ENCODE measurements at regions of chr20 and their contacts with region 1.

Region 1: DNA sequence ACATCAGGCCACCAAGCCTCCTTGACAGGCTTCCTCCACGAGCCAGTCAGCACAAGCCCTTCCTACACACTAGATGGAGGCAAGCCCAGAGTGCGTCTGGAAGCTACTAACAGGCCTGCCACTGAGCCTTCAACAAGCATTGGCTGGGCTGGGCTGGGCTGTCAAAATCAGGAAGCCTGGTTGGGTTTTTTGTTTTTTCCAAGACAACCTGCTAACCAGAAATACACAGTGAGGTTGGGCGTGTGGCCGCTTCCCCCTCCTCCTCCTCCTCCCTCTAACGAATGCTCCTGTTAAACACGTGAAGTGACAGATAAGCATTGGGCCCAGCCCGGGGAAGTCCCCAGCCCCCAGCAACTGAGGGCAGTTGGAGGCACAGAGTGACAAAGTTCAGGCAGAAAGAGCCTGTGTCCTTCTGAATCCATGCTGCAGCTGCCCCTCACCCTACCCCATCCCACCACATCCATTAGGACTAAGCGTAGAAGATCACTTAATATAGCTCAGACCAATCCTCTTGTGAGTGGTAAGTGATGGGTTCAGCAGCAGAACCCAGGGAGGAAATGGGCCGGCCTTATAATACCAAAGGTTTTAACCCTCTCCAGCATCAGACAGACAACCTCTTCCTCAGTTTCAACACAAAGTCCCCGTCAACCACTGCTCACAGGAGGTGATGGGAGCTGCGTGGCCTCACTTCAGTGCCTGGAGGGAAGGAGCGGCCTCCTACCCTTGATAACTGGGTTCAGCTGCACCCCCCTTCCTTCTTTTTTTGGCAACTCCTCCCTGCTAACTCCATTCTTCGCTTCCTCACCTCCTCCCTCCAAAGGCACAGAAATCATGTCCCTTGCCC is 1.1 kb downstream of the NFATC2 start:
- DNase-seq: peak; percentile 78 to 93 (median 83)
- H3K4me3 ChIP-seq: peak overlapping the region; percentile 95
- H3K4me3 Mint-ChIP-seq: peak overlapping the region; percentile 93 to 100 (median 97)
- H3K27ac ChIP-seq: peak overlapping the region; percentile 96
- H3K27ac Mint-ChIP-seq: peak overlapping the region; percentile 95 to 100 (median 98)
- H3K4me1 ChIP-seq: peaks cover 48% of the 10 kb centered on the region
- H3K4me1 Mint-ChIP-seq: peaks cover 55 to 60% (median 58%) of the 10 kb centered on the region in 3 donors
- H3K27me3 ChIP-seq: no peaks in the 10 kb centered on the region
- H3K27me3 Mint-ChIP-seq: peaks cover 0 to 3% of the 10 kb centered on the region in 2 donors

Region 2: DNA sequence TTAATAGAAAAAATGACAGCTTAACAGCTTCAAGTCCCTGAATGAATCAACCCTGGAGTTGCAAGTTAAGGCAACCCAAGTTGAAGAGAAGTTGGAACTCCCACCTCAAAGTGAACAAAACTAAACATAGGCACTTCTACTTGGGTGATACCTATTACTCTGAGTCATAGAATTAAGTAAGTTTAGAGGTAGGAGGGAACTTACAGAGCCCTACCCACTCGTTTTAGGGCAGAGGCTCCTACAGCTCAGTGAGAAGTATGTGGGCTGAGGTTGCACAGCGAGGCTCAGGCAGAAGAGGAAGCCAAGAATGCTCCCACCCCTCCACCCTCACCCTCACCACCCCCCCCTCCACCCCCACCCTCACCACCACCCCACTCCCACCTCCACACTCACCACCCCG is 41.1 kb before region 1 on chr20:
- CTCF ChIA-PET with region 1: interaction called, 21 read pairs
- POLR2A ChIA-PET with region 1: interaction called, 4 read pairs
- DNase-seq: peak; percentile 38 to 86 (median 59)
- H3K4me3 ChIP-seq: no peak overlapping the region
- H3K4me3 Mint-ChIP-seq: peak overlapping the region; percentile 20 to 83 (median 52)
- H3K27ac ChIP-seq: peak overlapping the region; percentile 45
- H3K27ac Mint-ChIP-seq: peak overlapping the region; percentile 70 to 100 (median 97)
- H3K4me1 ChIP-seq: peaks cover 67% of the 10 kb centered on the region
- H3K4me1 Mint-ChIP-seq: peaks cover 79 to 93% (median 90%) of the 10 kb centered on the region in 3 donors
- H3K27me3 ChIP-seq: no peaks in the 10 kb centered on the region
- H3K27me3 Mint-ChIP-seq: no peaks in the 10 kb centered on the region

Region 3: DNA sequence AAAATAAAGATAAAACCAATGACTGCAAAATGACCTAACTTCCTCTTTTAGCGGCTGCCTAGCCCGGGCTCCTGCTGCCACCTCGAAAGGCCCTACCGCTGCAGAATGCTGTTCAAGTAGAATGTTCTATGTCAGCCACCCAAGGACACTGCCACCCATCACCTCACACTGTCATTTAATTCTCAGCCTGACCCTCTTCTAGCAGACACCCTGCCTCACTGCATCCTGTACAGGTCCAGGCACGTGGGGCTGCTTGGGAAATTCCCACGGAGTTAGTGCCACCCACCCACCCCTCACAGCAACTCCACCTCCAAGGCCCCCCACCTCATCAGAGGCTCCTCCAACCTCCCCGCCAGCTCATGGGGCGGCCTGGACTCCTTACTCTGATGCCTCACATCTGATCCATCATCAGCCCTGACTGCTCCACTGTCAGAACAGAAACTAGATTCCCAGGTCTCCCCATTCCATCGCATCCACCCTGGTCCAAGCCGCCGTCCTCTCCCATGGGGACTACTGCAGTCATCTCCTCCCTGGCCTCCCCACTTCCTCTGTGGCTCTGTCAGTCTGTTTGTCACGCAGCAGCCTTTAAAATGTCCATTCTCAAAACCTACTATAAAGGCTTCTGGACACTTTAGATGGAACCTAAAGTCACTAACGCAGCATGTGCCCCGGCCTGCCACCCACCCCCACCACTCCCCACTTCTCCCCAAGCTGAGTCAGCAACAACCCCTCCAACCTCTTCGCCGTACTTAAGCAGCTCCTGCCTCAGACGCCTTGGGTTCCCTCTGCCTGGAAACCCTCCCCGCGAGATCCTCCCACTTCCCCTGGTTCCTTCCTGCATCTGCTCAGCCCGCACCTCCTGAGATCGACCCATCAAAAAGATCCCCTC is 15.9 kb before region 1 on chr20:
- CTCF ChIA-PET with region 1: interaction called, 18 read pairs
- POLR2A ChIA-PET with region 1: interaction called, 3 read pairs
- DNase-seq: peak in 4 of 5 donors; percentile 48 to 72 (median 54)
- H3K4me3 ChIP-seq: peak overlapping the region; percentile 20
- H3K4me3 Mint-ChIP-seq: peak overlapping the region; percentile 32 to 90 (median 80)
- H3K27ac ChIP-seq: peak overlapping the region; percentile 45
- H3K27ac Mint-ChIP-seq: peak overlapping the region; percentile 93 to 100 (median 96)
- H3K4me1 ChIP-seq: peaks cover 65% of the 10 kb centered on the region
- H3K4me1 Mint-ChIP-seq: peaks cover 69 to 88% (median 80%) of the 10 kb centered on the region in 3 donors
- H3K27me3 ChIP-seq: no peaks in the 10 kb centered on the region
- H3K27me3 Mint-ChIP-seq: no peaks in the 10 kb centered on the region

Region 4: GRCh38 chr20:51554538-51555165 is 13.2 kb after region 1 on chr20:
- CTCF ChIA-PET with region 1: interaction called, 10 read pairs
- POLR2A ChIA-PET with region 1: interaction called, 5 read pairs
- DNase-seq: peak in 3 of 5 donors; percentile 34 to 64 (median 36)
- H3K4me3 ChIP-seq: no peak overlapping the region
- H3K4me3 Mint-ChIP-seq: peak overlapping the region in 4 of 7 donors; percentile 17 to 65 (median 52)
- H3K27ac ChIP-seq: no peak overlapping the region
- H3K27ac Mint-ChIP-seq: peak overlapping the region in 7 of 8 donors; percentile 5 to 87 (median 48)
- H3K4me1 ChIP-seq: peaks cover 5% of the 10 kb centered on the region
- H3K4me1 Mint-ChIP-seq: peaks cover 16 to 20% (median 17%) of the 10 kb centered on the region in 3 donors
- H3K27me3 ChIP-seq: peaks cover 17% of the 10 kb centered on the region
- H3K27me3 Mint-ChIP-seq: peaks cover 7 to 23% of the 10 kb centered on the region in 2 donors

Region 5: GRCh38 chr20:51579137-51579536 is 37.7 kb after region 1 on chr20:
- CTCF ChIA-PET with region 1: no interaction called
- POLR2A ChIA-PET with region 1: no interaction called
- DNase-seq: no peak
- H3K4me3 ChIP-seq: no peak overlapping the region
- H3K4me3 Mint-ChIP-seq: no peak overlapping the region
- H3K27ac ChIP-seq: no peak overlapping the region
- H3K27ac Mint-ChIP-seq: no peak overlapping the region
- H3K4me1 ChIP-seq: no peaks in the 10 kb centered on the region
- H3K4me1 Mint-ChIP-seq: peaks cover 0 to 3% (median 0%) of the 10 kb centered on the region in 3 donors
- H3K27me3 ChIP-seq: no peaks in the 10 kb centered on the region
- H3K27me3 Mint-ChIP-seq: peaks cover 0 to 1% of the 10 kb centered on the region in 2 donors

Measured in CD8-positive, alpha-beta memory T cell (primary cell).